Activated B cell treated with CpG ODN at 0.5 μM for 24 hours (primary cell): ENCODE measurements at regions of chr7 and their contacts with region 1.

Region 1: GRCh38 chr7:43582503-43583423 is at the start of gene STK17A:
- DNase-seq: peak; percentile 94
- ATAC-seq: peak; percentile 84
- H3K4me3 Mint-ChIP-seq: peak within 1 kb of the TSS; percentile 92
- H3K27ac Mint-ChIP-seq: peak within 1 kb of the TSS; percentile 97
- H3K4me1 Mint-ChIP-seq: peaks cover 41% of the 10 kb centered on the region
- H3K27me3 Mint-ChIP-seq: no peaks in the 10 kb centered on the region
- CTCF ChIP-seq: peak; percentile 44
- total RNA-seq, gene STK17A: 67.1 and 68.6 TPM in 2 replicates

Region 2: GRCh38 chr7:43602271-43602670 is 19.5 kb after region 1 on chr7:
- CTCF ChIA-PET with region 1: interaction called, 19 read pairs
- POLR2A ChIA-PET with region 1: interaction called, 5 read pairs
- intact Hi-C with region 1: no loop called
- DNase-seq: no peak
- ATAC-seq: no peak
- H3K4me3 Mint-ChIP-seq: no peak overlapping the region
- H3K27ac Mint-ChIP-seq: no peak overlapping the region
- H3K4me1 Mint-ChIP-seq: peaks cover 38% of the 10 kb centered on the region
- H3K27me3 Mint-ChIP-seq: no peaks in the 10 kb centered on the region
- CTCF ChIP-seq: no peak

Region 3: GRCh38 chr7:43631559-43631958 is 48.8 kb after region 1 on chr7:
- CTCF ChIA-PET with region 1: interaction called, 43 read pairs
- POLR2A ChIA-PET with region 1: interaction called, 17 read pairs
- intact Hi-C with region 1: no loop called
- DNase-seq: no peak
- ATAC-seq: no peak
- H3K4me3 Mint-ChIP-seq: no peak overlapping the region
- H3K27ac Mint-ChIP-seq: peak overlapping the region; percentile 70
- H3K4me1 Mint-ChIP-seq: peaks cover 75% of the 10 kb centered on the region
- H3K27me3 Mint-ChIP-seq: no peaks in the 10 kb centered on the region
- CTCF ChIP-seq: no peak

Region 4: DNA sequence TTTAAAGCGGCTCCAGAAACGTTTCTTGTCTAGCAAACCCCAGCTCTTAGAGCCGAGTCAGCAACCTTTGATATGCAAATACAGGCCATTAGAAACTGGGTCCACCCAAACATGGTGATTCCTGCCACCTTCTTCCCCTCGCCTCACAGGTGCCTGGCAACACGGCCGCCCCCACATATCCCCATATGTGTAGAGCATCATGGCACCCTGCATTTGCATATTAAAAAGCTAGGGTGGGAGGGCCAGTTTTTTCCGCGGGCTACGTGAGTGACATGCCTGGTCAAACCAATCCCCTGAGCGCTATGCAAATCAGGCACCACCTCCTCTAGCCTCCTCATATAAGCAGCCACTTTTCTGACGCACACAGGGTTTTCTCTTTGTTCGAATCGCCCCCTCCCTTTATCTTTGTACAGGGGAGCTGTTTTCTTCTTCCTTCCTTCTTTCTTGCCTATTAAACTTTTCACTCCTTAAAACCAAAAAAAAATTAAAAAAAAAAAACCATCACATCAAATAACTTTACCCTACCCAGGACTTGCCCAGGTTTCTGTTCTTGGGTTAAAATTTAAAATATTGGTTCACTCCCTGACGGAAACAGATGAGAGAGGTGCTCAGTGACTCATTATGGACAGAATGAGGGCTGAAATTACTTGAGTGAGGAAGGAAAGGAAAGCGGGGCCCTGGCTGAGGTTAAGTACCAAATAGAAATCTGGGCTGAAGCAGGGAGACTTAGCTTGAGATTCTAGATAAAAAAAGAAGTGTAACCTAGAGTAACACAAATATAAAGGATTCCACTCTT is 86.7 kb after region 1 on chr7:
- CTCF ChIA-PET with region 1: interaction called, 14 read pairs
- POLR2A ChIA-PET with region 1: interaction called, 21 read pairs
- intact Hi-C with region 1: no loop called
- DNase-seq: no peak
- ATAC-seq: peak; percentile 73
- H3K4me3 Mint-ChIP-seq: peak overlapping the region; percentile 57
- H3K27ac Mint-ChIP-seq: peak overlapping the region; percentile 72
- H3K4me1 Mint-ChIP-seq: peaks cover 72% of the 10 kb centered on the region
- H3K27me3 Mint-ChIP-seq: no peaks in the 10 kb centered on the region
- CTCF ChIP-seq: no peak

Region 5: DNA sequence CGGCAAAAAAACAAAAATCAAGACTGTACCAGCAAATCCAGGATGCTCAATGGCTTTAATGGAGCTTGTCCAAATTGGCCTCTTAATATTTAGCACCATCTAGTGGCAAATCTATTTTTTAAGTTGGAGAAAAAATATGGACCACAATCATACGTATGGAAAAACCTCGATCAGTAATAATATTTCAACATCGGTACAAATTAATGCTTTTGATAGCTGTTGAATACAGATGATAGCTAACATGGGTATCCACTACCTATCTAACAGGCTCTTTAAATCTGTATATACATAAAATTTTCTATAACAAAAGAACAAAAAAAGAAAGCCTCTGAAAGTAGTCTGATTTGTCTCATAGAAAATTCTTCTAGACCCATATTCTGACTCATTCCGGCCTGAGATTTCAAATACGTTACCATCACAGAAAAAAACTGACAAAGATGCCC is 117.3 kb after region 1 on chr7:
- CTCF ChIA-PET with region 1: interaction called, 648 read pairs
- POLR2A ChIA-PET with region 1: interaction called, 295 read pairs
- intact Hi-C with region 1: loop called (anchors 1 kb)
- DNase-seq: no peak
- ATAC-seq: peak; percentile 84
- H3K4me3 Mint-ChIP-seq: peak overlapping the region; percentile 21
- H3K27ac Mint-ChIP-seq: peak overlapping the region; percentile 68
- H3K4me1 Mint-ChIP-seq: peaks cover 30% of the 10 kb centered on the region
- H3K27me3 Mint-ChIP-seq: no peaks in the 10 kb centered on the region
- CTCF ChIP-seq: peak; percentile 41

Region 6: DNA sequence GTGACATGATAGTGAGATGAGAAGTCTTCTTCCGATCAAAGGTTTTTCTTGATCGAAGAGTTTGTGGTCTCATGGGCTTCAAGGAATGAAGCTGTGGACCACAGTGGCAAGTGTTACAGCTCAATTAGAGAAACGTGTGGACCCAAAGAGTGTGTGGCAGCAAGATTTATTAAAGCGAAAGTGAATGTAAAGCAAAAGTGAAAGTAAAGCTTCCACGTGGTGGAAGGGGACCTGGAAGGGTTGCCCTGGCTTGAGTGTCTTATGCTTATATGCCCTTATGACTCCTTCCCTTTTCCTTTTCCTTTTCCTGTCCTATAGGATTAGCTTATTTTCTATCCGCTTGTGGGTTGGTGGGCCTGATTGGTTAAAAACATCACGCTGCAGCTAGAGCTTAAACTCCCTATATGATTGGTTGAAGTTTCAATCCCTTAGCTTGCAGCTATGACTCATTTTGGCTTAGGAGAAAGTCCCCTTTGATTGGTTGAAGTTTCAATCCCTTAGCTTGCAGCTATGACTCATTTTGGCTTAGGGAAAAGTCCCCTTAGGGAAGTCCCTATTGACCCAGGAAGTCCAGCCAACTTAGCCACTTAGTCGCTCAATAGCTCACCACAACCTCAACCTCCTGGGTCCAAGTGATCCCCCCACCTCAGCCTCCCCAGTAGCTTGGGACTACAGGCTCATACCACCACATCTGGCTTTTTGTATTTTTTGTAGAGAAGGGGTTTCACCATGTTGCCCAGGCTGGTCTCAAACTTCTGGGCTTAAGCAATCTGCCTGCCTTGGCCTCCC is 251.9 kb after region 1 on chr7:
- CTCF ChIA-PET with region 1: interaction called, 68 read pairs
- POLR2A ChIA-PET with region 1: interaction called, 16 read pairs
- intact Hi-C with region 1: loop called (anchors 1 kb)
- DNase-seq: no peak
- ATAC-seq: peak; percentile 55
- H3K4me3 Mint-ChIP-seq: peak overlapping the region; percentile 88
- H3K27ac Mint-ChIP-seq: peak overlapping the region; percentile 88
- H3K4me1 Mint-ChIP-seq: peaks cover 24% of the 10 kb centered on the region
- H3K27me3 Mint-ChIP-seq: peaks cover 3% of the 10 kb centered on the region
- CTCF ChIP-seq: no peak

Region 7: GRCh38 chr7:43938892-43939482 is 356.2 kb after region 1 on chr7:
- CTCF ChIA-PET with region 1: no interaction called
- POLR2A ChIA-PET with region 1: no interaction called
- intact Hi-C with region 1: no loop called
- DNase-seq: no peak
- ATAC-seq: no peak
- H3K4me3 Mint-ChIP-seq: no peak overlapping the region
- H3K27ac Mint-ChIP-seq: no peak overlapping the region
- H3K4me1 Mint-ChIP-seq: no peaks in the 10 kb centered on the region
- H3K27me3 Mint-ChIP-seq: no peaks in the 10 kb centered on the region
- CTCF ChIP-seq: no peak

Region 8: GRCh38 chr7:44275957-44276410 is 693.2 kb after region 1 on chr7:
- CTCF ChIA-PET with region 1: no interaction called
- POLR2A ChIA-PET with region 1: no interaction called
- intact Hi-C with region 1: no loop called
- DNase-seq: no peak
- ATAC-seq: no peak
- H3K4me3 Mint-ChIP-seq: no peak overlapping the region
- H3K27ac Mint-ChIP-seq: no peak overlapping the region
- H3K4me1 Mint-ChIP-seq: no peaks in the 10 kb centered on the region
- H3K27me3 Mint-ChIP-seq: peaks cover 6% of the 10 kb centered on the region
- CTCF ChIP-seq: no peak